A673 (cell line): ENCODE measurements at regions of chr17 and their contacts with region 1.

Region 1: DNA sequence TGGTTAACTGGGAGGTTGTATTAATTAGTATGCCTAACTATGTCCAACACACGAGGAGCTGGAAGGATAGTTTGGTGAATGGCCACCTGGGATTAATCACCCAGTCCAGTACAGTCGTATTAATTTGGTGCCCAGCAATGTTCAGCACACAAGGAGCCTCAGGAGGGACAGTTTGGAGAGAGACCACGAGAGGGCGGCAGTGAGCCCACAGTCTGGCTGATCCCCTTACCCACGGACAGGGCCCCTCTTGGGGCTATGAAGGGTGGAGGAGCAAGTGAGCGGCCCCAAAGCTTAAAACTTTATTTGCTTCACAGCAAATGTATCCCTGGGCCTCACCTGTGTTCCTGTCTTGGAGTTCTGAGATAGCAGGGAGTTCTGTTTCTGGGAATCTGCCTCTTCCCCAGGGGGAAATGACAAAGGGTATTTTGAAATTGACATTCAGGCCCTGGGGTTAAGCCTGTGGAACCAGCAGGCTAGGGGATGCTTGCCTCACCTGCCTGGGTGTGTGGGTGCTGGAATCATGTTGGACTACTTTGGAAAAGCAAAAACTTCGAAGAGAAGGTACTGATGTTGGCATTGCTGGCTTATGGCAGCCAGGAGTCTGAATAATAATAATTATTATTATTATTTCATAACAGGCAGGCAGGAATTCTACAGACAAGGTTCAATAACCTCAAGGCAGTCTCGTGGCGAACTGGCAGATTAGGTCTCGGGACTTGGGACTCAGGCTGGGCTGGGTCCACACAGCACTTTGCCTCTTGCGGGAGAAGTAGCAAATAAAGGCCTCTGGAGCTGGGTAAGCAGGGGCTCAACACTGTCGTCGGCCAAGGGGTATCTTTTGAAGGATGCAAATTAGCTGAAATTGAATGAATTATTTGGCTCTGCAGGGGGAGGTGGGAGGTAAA is 227.6 kb upstream of the ASIC2 start:
- DNase-seq: peak; percentile 60
- H3K4me3 ChIP-seq: no peak overlapping the region
- H3K27ac ChIP-seq: no peak overlapping the region
- H3K4me1 ChIP-seq: no peaks in the 10 kb centered on the region
- H3K27me3 ChIP-seq: no peaks in the 10 kb centered on the region
- CTCF ChIP-seq: peak; percentile 75

Region 2: DNA sequence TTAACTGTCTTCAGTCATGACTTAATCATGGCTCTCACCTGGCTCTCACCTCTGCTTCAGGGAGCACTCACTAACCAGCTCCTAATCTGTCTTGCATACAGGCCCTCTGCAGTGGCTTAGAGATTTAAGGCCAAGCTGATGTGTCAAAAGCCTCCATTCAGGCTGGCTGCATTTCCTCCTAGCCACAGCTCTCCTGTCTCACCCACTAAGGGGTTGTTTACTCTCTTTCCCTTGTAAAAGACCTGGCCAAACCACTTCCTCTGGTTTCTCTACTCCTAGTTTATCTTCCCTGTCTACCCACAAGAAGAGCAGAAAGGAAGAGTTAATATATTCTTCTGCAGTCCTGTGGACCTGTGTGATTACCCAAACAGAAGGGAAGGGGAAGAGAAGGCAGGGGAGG is 218.3 kb before region 1 on chr17:
- CTCF ChIA-PET with region 1: no interaction called
- POLR2A ChIA-PET with region 1: no interaction called
- intact Hi-C with region 1: loop called (anchors 10 kb)
- DNase-seq: no peak
- H3K4me3 ChIP-seq: no peak overlapping the region
- H3K27ac ChIP-seq: no peak overlapping the region
- H3K4me1 ChIP-seq: no peaks in the 10 kb centered on the region
- H3K27me3 ChIP-seq: no peaks in the 10 kb centered on the region
- CTCF ChIP-seq: no peak

Region 3: DNA sequence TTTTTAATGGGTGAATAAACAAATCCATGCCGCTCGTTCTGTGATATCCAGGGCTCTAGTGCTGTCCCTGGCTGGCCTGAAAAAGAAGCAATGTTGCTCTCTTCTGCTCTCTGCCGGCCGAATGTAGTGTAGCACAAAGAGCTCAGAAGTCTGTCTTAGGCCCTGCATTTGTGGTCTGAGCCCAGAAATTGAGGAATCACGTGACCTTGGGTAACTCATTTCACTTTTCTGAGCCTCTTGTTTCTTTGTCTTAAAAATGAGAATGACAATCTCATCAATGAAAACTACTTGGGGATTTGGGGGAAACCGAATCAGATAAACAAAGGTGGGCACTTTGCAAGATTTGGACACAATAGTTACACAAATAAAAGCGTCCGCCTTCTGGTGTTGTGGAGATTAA is 154.0 kb after region 1 on chr17:
- CTCF ChIA-PET with region 1: no interaction called
- POLR2A ChIA-PET with region 1: no interaction called
- intact Hi-C with region 1: loop called (anchors 5 kb)
- DNase-seq: peak; percentile 54
- H3K4me3 ChIP-seq: no peak overlapping the region
- H3K27ac ChIP-seq: no peak overlapping the region
- H3K4me1 ChIP-seq: no peaks in the 10 kb centered on the region
- H3K27me3 ChIP-seq: no peaks in the 10 kb centered on the region
- CTCF ChIP-seq: peak; percentile 61